Head of caudate nucleus (tissue), 42 donors: ENCODE measurements at regions of chr11 and their contacts with region 1.

Region 1: DNA sequence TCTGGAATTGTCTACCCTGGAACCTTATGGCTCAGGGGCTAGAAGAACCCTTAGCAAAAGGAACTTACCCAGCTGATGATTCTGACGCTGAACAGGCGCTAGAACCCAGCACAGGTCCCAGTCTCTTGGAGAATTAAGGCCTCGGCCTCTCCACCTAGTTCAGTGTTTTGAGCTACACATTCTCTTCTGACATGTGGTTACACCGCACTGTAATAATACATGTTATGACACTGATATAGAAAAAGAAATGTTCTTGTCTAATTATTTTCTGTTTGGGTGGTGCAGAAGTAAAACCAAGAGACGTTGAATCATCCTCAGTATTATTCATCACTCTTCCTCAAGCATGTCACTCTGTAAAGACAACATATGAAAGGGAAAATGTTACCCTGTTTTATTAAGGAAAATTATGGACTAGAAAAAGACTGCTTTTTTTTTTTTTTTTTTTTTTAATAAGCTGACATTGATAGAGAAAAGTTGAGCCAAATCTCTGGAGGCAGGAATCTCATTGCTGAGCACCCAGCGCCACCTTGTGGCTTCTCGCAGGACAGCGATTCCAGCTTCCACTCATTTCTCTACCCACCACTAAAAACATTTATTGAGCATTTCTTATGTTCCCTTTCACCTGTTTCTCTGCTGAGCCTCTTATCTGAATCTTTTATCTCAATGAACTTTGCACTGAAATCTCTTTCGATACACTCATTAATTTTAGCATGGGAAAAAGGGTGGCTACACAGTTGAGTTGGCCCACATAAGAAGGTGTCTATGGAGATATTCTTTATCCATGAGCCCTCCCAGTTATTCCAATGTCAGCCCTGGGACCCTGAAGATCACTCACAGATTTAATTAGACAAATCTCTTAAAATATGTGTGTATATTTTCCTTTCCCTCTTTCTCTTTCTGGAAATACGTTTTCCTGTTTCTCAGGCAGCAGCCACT is 12.6 kb upstream of the APLNR start:
- DNase-seq: peak; percentile 37 to 88 (median 73)

Region 2: DNA sequence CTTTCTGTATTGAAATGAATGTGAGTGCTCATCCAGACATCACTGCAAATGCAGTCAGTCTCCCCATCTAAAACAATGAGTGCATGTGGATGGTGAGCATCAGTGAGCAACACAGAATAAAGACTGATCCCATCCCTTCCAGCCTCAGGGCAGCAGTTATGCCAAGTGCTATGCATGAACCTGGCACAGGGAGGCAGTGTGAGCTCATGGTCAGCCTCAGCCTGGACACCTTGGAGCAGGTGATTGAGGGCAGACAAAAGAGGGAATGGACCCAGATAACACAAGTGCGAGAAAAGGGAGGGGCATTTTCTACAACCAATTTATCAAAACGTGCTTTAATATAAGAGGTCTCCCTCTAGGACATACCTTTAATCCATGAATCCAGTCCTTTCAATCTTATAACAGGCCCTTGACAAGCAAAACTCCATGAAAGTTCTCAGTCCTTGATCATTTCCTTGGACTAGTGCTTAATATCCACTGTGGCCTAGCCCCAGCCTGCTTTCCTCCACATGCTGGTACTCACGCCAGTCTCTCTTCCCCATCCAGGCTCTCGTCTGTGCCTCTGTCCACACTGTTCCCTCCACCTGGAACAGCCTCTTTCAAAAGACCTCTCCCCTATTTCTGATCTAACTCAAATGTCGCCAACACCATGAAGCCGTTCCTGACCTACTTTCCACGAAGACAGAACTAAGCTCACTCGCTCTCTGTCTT is 118.4 kb before region 1 on chr11:
- intact Hi-C with region 1: loop called (anchors 5 kb)
- DNase-seq: peak in 21 of 42 donors; percentile 5 to 45 (median 18)